ENCODE measurements at regions of chr1 and their contacts with region 1.

Region 1: DNA sequence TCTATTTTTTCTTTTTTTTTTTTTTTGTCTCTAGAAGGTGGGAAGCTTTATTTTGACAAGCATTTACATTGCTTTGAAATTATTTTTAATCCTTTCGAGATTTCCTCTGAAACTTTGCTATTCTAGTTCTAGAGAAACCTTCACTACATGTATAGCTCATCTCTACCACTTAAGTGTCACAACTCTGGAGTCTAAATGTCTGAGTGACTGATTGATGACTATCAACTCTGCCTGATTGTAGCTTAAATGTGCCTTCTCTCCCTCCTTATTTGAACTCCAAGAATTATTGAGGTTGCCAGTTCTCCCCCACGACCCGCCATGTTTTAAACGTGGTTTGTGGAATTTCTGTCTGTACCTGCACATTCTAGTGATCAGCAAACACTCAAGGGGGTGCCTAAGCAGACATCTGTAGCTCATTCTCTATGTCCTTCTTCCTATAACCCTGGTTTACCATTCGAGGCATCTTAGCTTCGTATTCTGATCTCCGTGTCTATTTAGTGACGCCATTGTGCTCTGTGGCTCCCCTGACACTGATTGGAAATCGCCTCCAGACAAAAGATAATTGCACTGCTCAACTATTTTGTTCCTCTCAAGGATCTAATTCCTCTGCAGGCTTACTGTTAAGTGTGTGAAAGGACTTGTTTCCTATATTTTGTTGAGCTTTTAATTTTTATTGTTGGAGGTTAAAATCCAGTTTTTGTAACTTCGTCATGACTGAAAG is 1570.6 kb downstream of the BRINP3 start:
- DNase-seq: no peak
- H3K4me3 ChIP-seq: no peak overlapping the region
- H3K27ac ChIP-seq: no peak overlapping the region
- H3K4me1 ChIP-seq: no peaks in the 10 kb centered on the region
- H3K27me3 ChIP-seq: no peaks in the 10 kb centered on the region
- CTCF ChIP-seq: no peak
- EP300 ChIP-seq: no peak
- POLR2A ChIP-seq: no peak

Region 2: GRCh38 chr1:187977298-187977697 is 929.8 kb before region 1 on chr1:
- intact Hi-C with region 1: loop called in 1 of 4 experiments (anchors 10 kb)
- DNase-seq: no peak
- H3K4me3 ChIP-seq: no peak overlapping the region
- H3K27ac ChIP-seq: no peak overlapping the region
- H3K4me1 ChIP-seq: no peaks in the 10 kb centered on the region
- H3K27me3 ChIP-seq: no peaks in the 10 kb centered on the region
- CTCF ChIP-seq: no peak
- EP300 ChIP-seq: no peak
- POLR2A ChIP-seq: no peak

Measured in ovary (tissue), 10 donors.